ENCODE measurements at regions of chrX and their contacts with region 1.

Region 1: GRCh38 chrX:41116948-41117347 is 31.7 kb downstream of the USP9X start:
- DNase-seq: peak; percentile 50
- ATAC-seq: peak; percentile 66
- H3K4me3 ChIP-seq: no peak overlapping the region
- H3K4me3 Mint-ChIP-seq: peak overlapping the region; percentile 55
- H3K27ac ChIP-seq: peak overlapping the region; percentile 16 to 53
- H3K27ac Mint-ChIP-seq: peak overlapping the region; percentile 61
- H3K4me1 ChIP-seq: peaks cover 43 to 51% of the 10 kb centered on the region in 2 donors
- H3K4me1 Mint-ChIP-seq: peaks cover 66% of the 10 kb centered on the region
- H3K27me3 ChIP-seq: no peaks in the 10 kb centered on the region
- H3K27me3 Mint-ChIP-seq: no peaks in the 10 kb centered on the region
- CTCF ChIP-seq: no peak

Region 2: DNA sequence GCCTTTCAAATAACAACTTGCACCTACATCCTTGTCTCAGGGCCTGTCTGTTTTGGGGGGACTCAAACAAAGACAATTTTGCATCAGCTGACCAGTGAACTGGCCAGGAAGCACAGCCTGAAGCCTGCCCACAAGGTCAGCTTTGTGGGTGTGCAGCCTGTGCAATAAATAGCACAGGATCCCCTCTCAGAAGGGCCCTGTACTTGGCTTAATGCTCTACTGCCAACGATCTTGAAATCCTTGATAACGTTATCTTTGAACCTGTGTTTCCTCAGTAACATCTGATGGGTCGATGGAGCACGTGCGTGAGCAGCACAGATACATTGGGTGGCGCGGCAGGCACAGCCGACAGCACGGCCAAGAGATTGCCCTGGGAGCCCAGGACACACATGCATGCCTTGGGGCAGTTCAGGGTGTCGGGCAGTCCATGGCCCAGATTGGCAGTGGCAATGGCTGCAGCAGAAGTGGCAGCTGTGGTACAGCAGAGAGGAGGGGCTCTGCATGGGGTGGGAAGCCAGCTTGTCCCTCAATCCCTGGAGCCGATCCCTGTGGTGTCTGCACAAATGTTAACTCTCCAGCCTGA is 595.0 kb before region 1 on chrX:
- CTCF ChIA-PET with region 1: no interaction called
- POLR2A ChIA-PET with region 1: no interaction called
- intact Hi-C with region 1: no loop called
- DNase-seq: no peak
- ATAC-seq: no peak
- H3K4me3 ChIP-seq: no peak overlapping the region
- H3K4me3 Mint-ChIP-seq: no peak overlapping the region
- H3K27ac ChIP-seq: no peak overlapping the region
- H3K27ac Mint-ChIP-seq: no peak overlapping the region
- H3K4me1 ChIP-seq: no peaks in the 10 kb centered on the region
- H3K4me1 Mint-ChIP-seq: no peaks in the 10 kb centered on the region
- H3K27me3 ChIP-seq: no peaks in the 10 kb centered on the region
- H3K27me3 Mint-ChIP-seq: peaks cover 4% of the 10 kb centered on the region
- CTCF ChIP-seq: no peak

Region 3: GRCh38 chrX:40647307-40648197 is 469.4 kb before region 1 on chrX and contains the start of gene CXorf38:
- CTCF ChIA-PET with region 1: interaction called, 11 read pairs
- POLR2A ChIA-PET with region 1: interaction called, 5 read pairs
- intact Hi-C with region 1: no loop called
- DNase-seq: peak; percentile 94
- ATAC-seq: peak; percentile 68
- H3K4me3 ChIP-seq: peak within 1 kb of the TSS; percentile 56 to 87 (median 76)
- H3K4me3 Mint-ChIP-seq: peak within 1 kb of the TSS; percentile 94
- H3K27ac ChIP-seq: peak within 1 kb of the TSS; percentile 72 to 94
- H3K27ac Mint-ChIP-seq: peak within 1 kb of the TSS; percentile 92
- H3K4me1 ChIP-seq: peaks cover 38 to 40% of the 10 kb centered on the region in 2 donors
- H3K4me1 Mint-ChIP-seq: peaks cover 35% of the 10 kb centered on the region
- H3K27me3 ChIP-seq: no peaks in the 10 kb centered on the region
- H3K27me3 Mint-ChIP-seq: no peaks in the 10 kb centered on the region
- CTCF ChIP-seq: no peak
- total RNA-seq, gene CXorf38: 26.4 and 27.4 TPM in 2 replicates

Region 4: DNA sequence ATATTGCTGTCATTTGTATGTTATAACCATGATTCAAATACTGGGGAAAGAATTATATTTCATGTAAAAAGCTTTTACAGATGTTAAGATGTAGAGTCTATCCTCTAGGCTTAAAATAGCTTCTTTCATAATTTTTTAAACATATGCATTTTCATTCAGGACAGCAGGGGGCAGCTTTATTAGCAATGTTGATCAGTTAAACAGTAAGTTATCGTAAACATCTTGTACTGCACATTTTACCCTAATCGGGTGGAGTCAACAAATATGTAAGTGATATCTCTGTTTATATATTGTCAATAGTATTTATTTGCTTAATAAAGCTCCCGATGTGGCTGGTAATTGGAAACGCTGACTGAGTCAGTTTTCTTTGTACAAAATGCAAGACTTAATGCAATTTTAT is 239.1 kb before region 1 on chrX:
- CTCF ChIA-PET with region 1: interaction called, 131 read pairs
- POLR2A ChIA-PET with region 1: interaction called, 5 read pairs
- intact Hi-C with region 1: loop called (anchors 1 kb)
- DNase-seq: peak; percentile 49
- ATAC-seq: no peak
- H3K4me3 ChIP-seq: no peak overlapping the region
- H3K4me3 Mint-ChIP-seq: no peak overlapping the region
- H3K27ac ChIP-seq: no peak overlapping the region
- H3K27ac Mint-ChIP-seq: no peak overlapping the region
- H3K4me1 ChIP-seq: no peaks in the 10 kb centered on the region
- H3K4me1 Mint-ChIP-seq: no peaks in the 10 kb centered on the region
- H3K27me3 ChIP-seq: no peaks in the 10 kb centered on the region
- H3K27me3 Mint-ChIP-seq: no peaks in the 10 kb centered on the region
- CTCF ChIP-seq: peak; percentile 55

Region 5: GRCh38 chrX:41064028-41064427 is 52.9 kb before region 1 on chrX:
- CTCF ChIA-PET with region 1: no interaction called
- POLR2A ChIA-PET with region 1: no interaction called
- intact Hi-C with region 1: loop called (anchors 10 kb)
- DNase-seq: no peak
- ATAC-seq: no peak
- H3K4me3 ChIP-seq: no peak overlapping the region
- H3K4me3 Mint-ChIP-seq: no peak overlapping the region
- H3K27ac ChIP-seq: no peak overlapping the region
- H3K27ac Mint-ChIP-seq: no peak overlapping the region
- H3K4me1 ChIP-seq: no peaks in the 10 kb centered on the region
- H3K4me1 Mint-ChIP-seq: peaks cover 2% of the 10 kb centered on the region
- H3K27me3 ChIP-seq: no peaks in the 10 kb centered on the region
- H3K27me3 Mint-ChIP-seq: no peaks in the 10 kb centered on the region
- CTCF ChIP-seq: no peak

Region 6: DNA sequence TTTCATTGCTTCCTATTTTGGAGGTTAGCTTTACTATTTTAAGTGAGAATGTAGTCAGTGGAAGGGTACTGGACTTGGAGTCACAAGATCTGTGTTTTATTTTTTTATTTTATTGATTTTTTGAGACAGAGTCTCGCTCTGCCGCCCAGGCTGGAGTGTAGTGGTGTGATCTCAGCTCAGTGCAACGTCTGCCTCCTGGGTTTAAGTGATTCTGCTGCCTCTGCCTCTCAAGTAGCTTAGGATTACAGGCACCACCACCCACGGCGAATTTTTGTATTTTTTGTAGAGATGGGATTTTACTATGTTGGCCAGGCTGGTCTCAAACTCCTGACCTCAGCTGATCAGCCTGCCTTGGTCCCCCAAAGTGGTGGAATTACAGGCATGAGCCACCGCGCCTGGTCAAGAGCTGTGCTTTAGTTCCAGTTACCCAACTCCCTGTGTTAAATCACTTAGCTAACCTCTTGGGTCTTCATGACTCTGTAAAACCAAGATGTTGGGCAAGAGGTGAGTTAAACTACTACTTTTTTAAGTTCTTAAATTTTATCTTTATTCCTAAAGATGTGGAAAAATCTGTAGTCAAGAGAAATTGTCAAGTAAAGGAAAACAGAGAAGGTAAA is 20.5 kb before region 1 on chrX:
- CTCF ChIA-PET with region 1: interaction called, 12 read pairs
- POLR2A ChIA-PET with region 1: interaction called, 3 read pairs
- intact Hi-C with region 1: no loop called
- DNase-seq: no peak
- ATAC-seq: no peak
- H3K4me3 ChIP-seq: no peak overlapping the region
- H3K4me3 Mint-ChIP-seq: no peak overlapping the region
- H3K27ac ChIP-seq: no peak overlapping the region
- H3K27ac Mint-ChIP-seq: no peak overlapping the region
- H3K4me1 ChIP-seq: peaks cover 22 to 35% of the 10 kb centered on the region in 2 donors
- H3K4me1 Mint-ChIP-seq: peaks cover 62% of the 10 kb centered on the region
- H3K27me3 ChIP-seq: no peaks in the 10 kb centered on the region
- H3K27me3 Mint-ChIP-seq: no peaks in the 10 kb centered on the region
- CTCF ChIP-seq: no peak

Region 7: GRCh38 chrX:41258226-41258625 is 141.3 kb after region 1 on chrX:
- CTCF ChIA-PET with region 1: no interaction called
- POLR2A ChIA-PET with region 1: no interaction called
- intact Hi-C with region 1: no loop called
- DNase-seq: no peak
- ATAC-seq: no peak
- H3K4me3 ChIP-seq: peak overlapping the region in 1 of 5 experiments; percentile 30
- H3K4me3 Mint-ChIP-seq: no peak overlapping the region
- H3K27ac ChIP-seq: no peak overlapping the region
- H3K27ac Mint-ChIP-seq: no peak overlapping the region
- H3K4me1 ChIP-seq: peaks cover 11 to 12% of the 10 kb centered on the region in 2 donors
- H3K4me1 Mint-ChIP-seq: peaks cover 15% of the 10 kb centered on the region
- H3K27me3 ChIP-seq: no peaks in the 10 kb centered on the region
- H3K27me3 Mint-ChIP-seq: no peaks in the 10 kb centered on the region
- CTCF ChIP-seq: no peak

Region 8: GRCh38 chrX:41322821-41323603 is 206.1 kb after region 1 on chrX:
- CTCF ChIA-PET with region 1: no interaction called
- POLR2A ChIA-PET with region 1: no interaction called
- intact Hi-C with region 1: no loop called
- DNase-seq: no peak
- ATAC-seq: no peak
- H3K4me3 ChIP-seq: no peak overlapping the region
- H3K4me3 Mint-ChIP-seq: no peak overlapping the region
- H3K27ac ChIP-seq: no peak overlapping the region
- H3K27ac Mint-ChIP-seq: no peak overlapping the region
- H3K4me1 ChIP-seq: no peaks in the 10 kb centered on the region
- H3K4me1 Mint-ChIP-seq: no peaks in the 10 kb centered on the region
- H3K27me3 ChIP-seq: no peaks in the 10 kb centered on the region
- H3K27me3 Mint-ChIP-seq: no peaks in the 10 kb centered on the region
- CTCF ChIP-seq: no peak